ENCODE measurements at regions of chr1 and their contacts with region 1.

Region 1: DNA sequence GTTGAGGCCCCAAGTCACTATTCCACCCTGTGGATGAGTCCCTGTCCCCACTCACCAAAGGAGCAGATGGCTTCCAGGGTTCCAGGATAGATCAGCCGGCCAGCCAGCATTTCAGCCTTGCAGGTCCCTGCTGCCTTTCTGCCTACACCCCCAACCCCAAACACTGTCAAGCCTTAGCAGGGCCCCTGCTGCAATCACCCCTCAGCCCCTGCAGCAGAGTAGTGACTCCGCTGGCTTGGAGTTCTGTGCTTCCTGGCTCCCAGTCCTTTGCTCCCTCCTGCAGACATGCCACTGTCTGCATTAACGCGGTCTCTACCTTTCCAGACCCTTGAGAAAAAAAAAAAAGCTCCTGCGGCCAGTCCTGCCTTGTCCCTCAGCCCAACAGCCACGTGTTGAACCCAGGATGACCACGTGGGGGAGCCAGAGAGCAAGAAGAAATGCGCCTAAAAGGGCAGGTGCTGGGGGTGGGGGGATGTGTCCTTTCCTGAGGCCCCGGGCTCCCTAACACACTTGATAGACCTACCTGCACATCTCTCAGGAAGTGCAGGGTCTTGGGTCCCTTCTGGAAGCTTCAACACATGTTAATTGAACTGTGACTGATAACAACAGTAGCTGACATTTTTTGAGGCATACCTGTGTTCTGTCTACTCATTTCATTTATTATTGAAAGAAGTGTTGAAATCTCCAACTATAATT is 37.4 kb downstream of the RASSF5 start:
- DNase-seq: peak; percentile 57 to 79
- ATAC-seq: peak; percentile 92 to 96
- H3K4me3 ChIP-seq: no peak overlapping the region
- H3K27ac ChIP-seq: no peak overlapping the region
- H3K4me1 ChIP-seq: no peaks in the 10 kb centered on the region
- CTCF ChIP-seq: peak; percentile 85
- EP300 ChIP-seq: no peak
- POLR2A ChIP-seq: no peak
- RAD21 ChIP-seq: peak; percentile 64 to 72

Region 2: GRCh38 chr1:206469933-206470691 is 74.6 kb before region 1 on chr1 and contains the start of gene IKBKE:
- CTCF ChIA-PET with region 1: interaction called, 11 read pairs
- POLR2A ChIA-PET with region 1: no interaction called
- DNase-seq: peak; percentile 67 to 96
- ATAC-seq: peak; percentile 79 to 93
- H3K4me3 ChIP-seq: peak within 1 kb of the TSS; percentile 63
- H3K27ac ChIP-seq: peak within 1 kb of the TSS; percentile 76 to 93
- H3K4me1 ChIP-seq: peaks cover 21% of the 10 kb centered on the region
- CTCF ChIP-seq: no peak
- EP300 ChIP-seq: no peak
- POLR2A ChIP-seq: peak; percentile 61
- RAD21 ChIP-seq: no peak
- polyA plus RNA-seq, gene IKBKE: 6.3 and 6.4 TPM in 2 replicates

Region 3: DNA sequence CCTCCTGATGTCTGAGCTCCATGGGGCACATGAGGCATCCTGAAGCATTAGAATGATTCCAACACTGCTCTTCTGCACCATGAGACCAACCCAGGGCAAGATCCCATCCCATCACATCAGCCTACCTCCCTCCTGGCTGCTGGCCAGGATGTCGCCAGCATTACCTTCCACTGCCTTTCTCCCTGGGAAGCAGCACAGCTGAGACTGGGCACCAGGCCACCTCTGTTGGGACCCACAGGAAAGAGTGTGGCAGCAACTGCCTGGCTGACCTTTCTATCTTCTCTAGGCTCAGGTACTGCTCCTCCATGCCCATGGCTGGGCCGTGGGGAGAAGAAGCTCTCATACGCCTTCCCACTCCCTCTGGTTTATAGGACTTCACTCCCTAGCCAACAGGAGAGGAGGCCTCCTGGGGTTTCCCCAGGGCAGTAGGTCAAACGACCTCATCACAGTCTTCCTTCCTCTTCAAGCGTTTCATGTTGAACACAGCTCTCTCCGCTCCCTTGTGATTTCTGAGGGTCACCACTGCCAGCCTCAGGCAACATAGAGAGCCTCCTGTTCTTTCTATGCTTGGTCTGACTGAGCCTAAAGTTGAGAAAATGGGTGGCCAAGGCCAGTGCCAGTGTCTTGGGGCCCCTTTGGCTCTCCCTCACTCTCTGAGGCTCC is 48.4 kb before region 1 on chr1:
- CTCF ChIA-PET with region 1: interaction called, 24 read pairs
- POLR2A ChIA-PET with region 1: interaction called, 4 read pairs
- DNase-seq: no peak
- ATAC-seq: no peak
- H3K4me3 ChIP-seq: no peak overlapping the region
- H3K27ac ChIP-seq: no peak overlapping the region
- H3K4me1 ChIP-seq: peaks cover 11% of the 10 kb centered on the region; the same call in 2 of the 3 replicates
- CTCF ChIP-seq: no peak
- EP300 ChIP-seq: no peak
- POLR2A ChIP-seq: no peak
- RAD21 ChIP-seq: no peak

Region 4: DNA sequence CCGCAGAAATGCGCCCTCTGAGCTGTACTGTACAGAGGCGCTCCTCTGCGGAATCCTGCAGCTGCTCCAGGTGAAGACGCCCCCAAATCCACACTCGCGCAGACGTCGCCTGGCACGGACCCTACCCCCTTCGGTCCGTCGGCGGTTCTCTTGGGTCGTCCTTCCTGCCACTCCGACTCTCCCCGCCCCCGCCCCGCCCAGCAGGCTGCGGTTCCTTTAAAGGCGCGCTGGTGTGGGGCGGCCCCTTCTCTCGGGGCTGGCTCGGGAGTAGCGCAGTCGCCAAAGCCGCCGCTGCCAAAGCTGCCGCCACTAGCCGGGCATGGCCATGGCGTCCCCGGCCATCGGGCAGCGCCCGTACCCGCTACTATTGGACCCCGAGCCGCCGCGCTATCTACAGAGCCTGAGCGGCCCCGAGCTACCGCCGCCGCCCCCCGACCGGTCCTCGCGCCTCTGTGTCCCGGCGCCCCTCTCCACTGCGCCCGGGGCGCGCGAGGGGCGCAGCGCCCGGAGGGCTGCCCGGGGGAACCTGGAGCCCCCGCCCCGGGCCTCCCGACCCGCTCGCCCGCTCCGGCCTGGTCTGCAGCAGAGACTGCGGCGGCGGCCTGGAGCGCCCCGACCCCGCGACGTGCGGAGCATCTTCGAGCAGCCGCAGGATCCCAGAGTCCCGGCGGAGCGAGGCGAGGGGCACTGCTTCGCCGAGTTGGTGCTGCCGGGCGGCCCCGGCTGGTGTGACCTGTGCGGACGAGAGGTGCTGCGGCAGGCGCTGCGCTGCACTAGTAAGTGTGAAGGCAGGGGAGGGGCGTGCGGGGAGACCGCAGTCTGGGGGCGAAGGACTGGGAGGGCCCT is 37.2 kb before region 1 on chr1 and contains the start of gene RASSF5:
- CTCF ChIA-PET with region 1: interaction called, 12 read pairs
- POLR2A ChIA-PET with region 1: no interaction called
- DNase-seq: peak; percentile 55 to 73
- ATAC-seq: peak; percentile 80 to 90
- H3K4me3 ChIP-seq: peak within 1 kb of the TSS; percentile 55
- H3K27ac ChIP-seq: peak within 1 kb of the TSS; percentile 19 to 85; a peak in 5 of 6 replicates
- H3K4me1 ChIP-seq: peaks cover 16% of the 10 kb centered on the region
- CTCF ChIP-seq: no peak
- EP300 ChIP-seq: no peak
- POLR2A ChIP-seq: peak; percentile 86
- RAD21 ChIP-seq: no peak
- polyA plus RNA-seq, gene RASSF5: 2.0 and 2.2 TPM in 2 replicates

Region 5: GRCh38 chr1:206513312-206514111 is 31.2 kb before region 1 on chr1:
- CTCF ChIA-PET with region 1: interaction called, 28 read pairs
- POLR2A ChIA-PET with region 1: no interaction called
- DNase-seq: no peak
- ATAC-seq: peak; percentile 42 to 60; a peak in 4 of 6 replicates
- H3K4me3 ChIP-seq: no peak overlapping the region
- H3K27ac ChIP-seq: peak overlapping the region; percentile 39 to 55; a peak in 3 of 6 replicates
- H3K4me1 ChIP-seq: peaks cover 16% of the 10 kb centered on the region
- CTCF ChIP-seq: no peak
- EP300 ChIP-seq: no peak
- POLR2A ChIP-seq: no peak
- RAD21 ChIP-seq: no peak

Region 6: DNA sequence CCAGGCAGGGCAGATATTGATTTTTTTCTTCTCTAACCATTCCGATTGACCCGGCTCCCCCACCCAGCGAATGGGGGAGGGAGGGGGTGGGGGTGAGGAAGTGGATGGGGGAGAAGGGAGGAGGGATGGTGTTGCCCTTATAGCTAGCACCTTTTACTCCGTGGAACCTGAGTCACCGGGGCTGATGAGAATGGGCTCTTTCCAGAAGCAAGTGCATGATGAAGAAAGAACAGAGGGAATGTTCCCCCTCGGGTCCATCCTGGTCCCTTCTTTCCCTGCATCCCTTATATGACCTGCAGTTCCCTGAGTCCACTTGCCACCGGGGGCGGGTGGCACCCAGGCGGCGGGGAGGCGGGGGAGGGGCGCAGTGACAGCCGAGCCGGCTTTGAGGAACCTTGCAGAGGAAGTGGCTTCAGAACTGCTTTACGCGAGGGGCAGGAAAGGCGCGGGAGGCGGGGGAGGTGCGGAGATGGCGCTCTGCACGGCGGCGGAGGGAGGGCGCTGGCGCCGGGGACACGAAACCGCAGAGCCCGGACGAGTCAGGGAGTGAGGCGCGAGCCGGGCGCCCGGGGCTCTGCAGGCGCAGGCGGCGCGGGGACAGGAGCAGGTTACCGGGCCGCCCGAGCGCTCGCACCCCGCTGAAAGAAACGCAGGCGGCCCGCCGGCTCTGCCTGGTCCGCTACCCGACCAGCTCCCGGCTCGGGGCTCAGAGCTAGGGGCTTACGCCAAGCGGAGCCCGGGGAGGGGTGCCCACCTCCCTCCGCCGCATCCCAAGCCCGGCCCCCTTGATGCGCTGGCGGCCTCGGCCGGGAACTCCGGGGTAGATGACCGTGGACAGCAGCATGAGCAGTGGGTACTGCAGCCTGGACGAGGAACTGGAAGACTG is 12.3 kb after region 1 on chr1:
- CTCF ChIA-PET with region 1: interaction called, 66 read pairs
- POLR2A ChIA-PET with region 1: interaction called, 3 read pairs
- DNase-seq: peak; percentile 25 to 51
- ATAC-seq: peak; percentile 77 to 88
- H3K4me3 ChIP-seq: peak overlapping the region; percentile 56
- H3K27ac ChIP-seq: peak overlapping the region; percentile 49 to 80; a peak in 5 of 6 replicates
- H3K4me1 ChIP-seq: peaks cover 17% of the 10 kb centered on the region
- CTCF ChIP-seq: no peak
- EP300 ChIP-seq: no peak
- POLR2A ChIP-seq: no peak
- RAD21 ChIP-seq: no peak

Region 7: DNA sequence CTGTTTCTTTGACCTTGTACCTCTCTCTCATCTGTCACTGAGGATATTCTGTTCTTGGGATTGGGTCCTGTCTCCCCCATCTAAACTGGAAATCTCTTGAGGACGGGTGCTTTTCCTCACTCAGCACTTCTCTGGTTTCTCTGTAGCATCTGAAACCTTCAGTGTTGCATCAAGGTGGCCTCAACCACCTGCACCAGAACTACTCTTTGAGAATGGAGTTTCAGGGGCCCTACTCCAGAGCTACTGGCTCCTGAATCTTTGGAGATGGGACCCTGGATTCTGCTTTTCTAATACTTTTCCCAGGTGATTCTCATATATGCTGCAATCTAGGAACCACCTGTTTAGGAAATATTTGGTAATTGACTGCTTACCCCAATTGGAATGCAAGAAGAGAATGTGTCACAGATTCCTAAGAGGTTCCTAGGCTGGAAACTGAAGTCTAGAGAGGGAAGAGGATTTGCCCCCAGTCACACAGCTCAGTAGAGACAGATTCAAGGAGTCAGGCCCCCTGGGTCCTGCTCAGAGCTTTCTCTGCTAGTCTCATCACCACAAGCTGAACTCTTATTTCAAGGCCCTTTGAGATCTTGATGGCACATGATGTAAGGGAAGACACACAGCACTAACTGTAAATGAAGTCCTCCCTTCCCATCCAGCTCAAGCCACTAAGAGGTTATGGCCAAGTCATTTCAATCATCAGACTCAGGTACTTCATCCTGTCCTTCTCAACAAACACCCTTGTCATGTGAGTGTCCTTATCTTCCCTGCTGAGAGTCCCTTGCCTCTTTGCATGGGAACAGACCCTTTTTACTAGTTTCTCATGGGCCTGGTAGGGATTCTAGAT is 18.9 kb after region 1 on chr1:
- CTCF ChIA-PET with region 1: interaction called, 66 read pairs
- POLR2A ChIA-PET with region 1: no interaction called
- DNase-seq: no peak
- ATAC-seq: no peak
- H3K4me3 ChIP-seq: no peak overlapping the region
- H3K27ac ChIP-seq: no peak overlapping the region
- H3K4me1 ChIP-seq: peaks cover 6% of the 10 kb centered on the region; the same call in 1 of the 3 replicates
- CTCF ChIP-seq: no peak
- EP300 ChIP-seq: no peak
- POLR2A ChIP-seq: no peak
- RAD21 ChIP-seq: no peak

Region 8: DNA sequence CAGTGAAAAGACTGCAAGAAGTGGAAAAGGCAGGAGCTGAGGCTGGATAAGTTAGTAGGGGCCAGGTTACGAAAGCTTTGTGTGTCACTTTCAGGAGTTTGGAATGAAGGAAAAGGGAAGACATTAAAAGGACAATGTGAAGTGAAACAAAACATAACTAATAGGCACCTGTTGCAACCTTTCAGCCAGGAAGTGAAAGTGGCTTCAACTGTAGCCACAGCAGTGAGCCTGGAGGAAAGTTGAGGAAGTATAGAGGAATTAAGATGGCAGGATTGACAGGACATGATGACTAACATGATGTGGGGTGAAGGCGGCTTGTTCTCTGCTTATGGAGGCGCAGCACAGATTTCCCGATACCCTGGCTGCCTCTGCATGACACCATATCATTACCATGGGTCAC is 628.2 kb after region 1 on chr1:
- CTCF ChIA-PET with region 1: no interaction called
- POLR2A ChIA-PET with region 1: no interaction called
- DNase-seq: no peak
- ATAC-seq: no peak
- H3K4me3 ChIP-seq: no peak overlapping the region
- H3K27ac ChIP-seq: no peak overlapping the region
- H3K4me1 ChIP-seq: no peaks in the 10 kb centered on the region
- CTCF ChIP-seq: no peak
- EP300 ChIP-seq: no peak
- POLR2A ChIP-seq: no peak
- RAD21 ChIP-seq: no peak